ENCODE measurements at regions of chr1 and their contacts with region 1.

Region 1: DNA sequence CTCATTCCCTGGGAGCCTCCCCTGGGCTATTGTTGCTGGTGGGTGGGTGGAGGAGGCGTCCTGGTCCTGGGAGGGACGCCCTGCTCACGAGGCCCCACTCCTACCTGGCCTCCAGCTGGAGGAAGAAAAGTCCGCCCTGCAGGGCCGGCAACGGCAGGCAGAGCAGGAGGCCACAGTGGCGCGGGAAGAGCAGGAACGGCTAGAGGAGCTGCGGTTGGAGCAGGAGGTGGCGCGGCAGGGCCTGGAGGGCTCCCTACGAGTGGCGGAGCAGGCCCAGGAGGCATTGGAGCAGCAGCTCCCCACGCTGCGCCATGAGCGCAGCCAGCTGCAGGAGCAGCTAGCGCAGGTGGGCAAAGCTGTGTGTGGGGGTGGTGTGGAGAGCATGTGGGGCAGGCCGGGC is 24.9 kb downstream of the CROCC start:
- DNase-seq: no peak
- ATAC-seq: no peak
- H3K4me3 ChIP-seq: no peak overlapping the region
- H3K4me3 Mint-ChIP-seq: no peak overlapping the region
- H3K27ac ChIP-seq: no peak overlapping the region
- H3K27ac Mint-ChIP-seq: no peak overlapping the region
- H3K4me1 ChIP-seq: no peaks in the 10 kb centered on the region
- H3K4me1 Mint-ChIP-seq: no peaks in the 10 kb centered on the region
- H3K27me3 ChIP-seq: no peaks in the 10 kb centered on the region
- H3K27me3 Mint-ChIP-seq: no peaks in the 10 kb centered on the region
- CTCF ChIP-seq: no peak

Region 2: DNA sequence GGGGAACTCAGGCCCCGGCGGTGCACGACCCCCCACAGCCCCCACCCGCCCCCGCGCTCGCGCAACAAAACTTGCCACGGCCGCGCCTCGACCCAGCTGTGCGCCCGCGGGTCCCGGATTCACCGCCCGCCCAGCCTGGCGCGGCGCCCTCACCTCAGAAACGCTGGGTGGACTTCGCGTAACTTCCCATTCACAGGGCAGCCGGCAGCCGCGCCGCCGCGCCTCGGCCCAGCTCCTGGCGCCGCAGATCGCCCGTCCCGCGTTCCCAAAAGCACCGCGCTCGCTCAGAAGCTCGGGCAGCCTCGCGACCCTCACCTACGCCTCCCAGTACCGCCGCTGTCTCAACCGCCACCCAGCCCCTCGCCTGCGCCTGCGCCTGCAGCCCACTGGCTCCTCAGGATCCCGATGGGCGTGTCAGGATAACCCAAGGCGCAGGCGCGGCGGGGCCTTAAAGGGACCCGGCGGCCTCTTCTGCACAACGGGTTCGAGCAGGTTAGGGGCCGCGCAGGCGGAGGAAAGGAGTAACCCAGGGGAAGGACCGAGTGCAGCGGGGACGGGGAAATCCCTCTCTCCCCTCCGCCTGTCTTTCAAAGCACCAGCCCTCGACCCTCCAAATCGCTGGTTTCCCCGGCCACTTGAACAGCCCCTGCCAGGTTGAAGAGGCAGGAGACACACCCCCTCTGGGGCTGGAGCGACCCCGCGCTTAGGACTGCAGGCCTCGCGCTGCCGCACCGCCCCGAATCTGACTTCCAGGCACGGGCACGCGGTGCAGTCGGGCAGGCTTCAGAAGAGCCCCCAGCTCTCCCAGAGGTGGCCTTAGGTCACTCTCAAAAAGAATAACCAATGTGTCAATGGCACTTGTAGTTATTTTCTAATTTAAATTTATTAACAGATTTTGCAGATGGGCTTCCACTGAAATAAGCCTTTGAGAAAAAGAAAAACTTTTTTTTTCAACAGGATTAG is 333.2 kb before region 1 on chr1 and contains the start of gene NBPF1:
- CTCF ChIA-PET with region 1: interaction called, 13 read pairs
- POLR2A ChIA-PET with region 1: interaction called, 3 read pairs
- intact Hi-C with region 1: loop called in 1 of 2 experiments (anchors 1 kb)
- DNase-seq: peak; percentile 66 to 95 (median 93)
- ATAC-seq: peak; percentile 94
- H3K4me3 ChIP-seq: peak within 1 kb of the TSS; percentile 61 to 68
- H3K4me3 Mint-ChIP-seq: no peak within 1 kb of the TSS
- H3K27ac ChIP-seq: peak within 1 kb of the TSS; percentile 21 to 42
- H3K27ac Mint-ChIP-seq: no peak within 1 kb of the TSS
- H3K4me1 ChIP-seq: peaks cover 18% of the 10 kb centered on the region
- H3K4me1 Mint-ChIP-seq: no peaks in the 10 kb centered on the region
- H3K27me3 ChIP-seq: no peaks in the 10 kb centered on the region
- H3K27me3 Mint-ChIP-seq: no peaks in the 10 kb centered on the region
- CTCF ChIP-seq: no peak
- total RNA-seq, gene NBPF1: 5.4 to 7.0 TPM

Region 3: DNA sequence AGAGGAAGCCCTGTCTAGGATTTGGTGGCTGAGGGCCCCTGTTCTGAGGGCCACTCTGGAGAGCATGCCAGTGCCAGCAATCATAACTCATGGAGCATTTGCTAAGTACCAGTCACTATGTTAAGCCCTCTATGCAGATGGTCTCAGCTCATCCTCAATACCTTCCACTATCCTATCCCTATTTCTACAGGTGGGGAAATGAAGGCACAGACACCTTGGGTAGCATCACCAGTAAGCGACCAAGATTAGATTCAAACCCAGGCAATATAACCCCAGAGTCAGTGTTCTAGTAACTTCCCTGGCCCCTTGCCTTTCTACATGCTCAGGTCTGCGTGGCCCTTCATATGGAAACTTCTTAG is 325.4 kb before region 1 on chr1:
- CTCF ChIA-PET with region 1: interaction called, 13 read pairs
- POLR2A ChIA-PET with region 1: no interaction called
- intact Hi-C with region 1: loop called in 1 of 2 experiments (anchors 1 kb)
- DNase-seq: no peak
- ATAC-seq: no peak
- H3K4me3 ChIP-seq: no peak overlapping the region
- H3K4me3 Mint-ChIP-seq: no peak overlapping the region
- H3K27ac ChIP-seq: no peak overlapping the region
- H3K27ac Mint-ChIP-seq: no peak overlapping the region
- H3K4me1 ChIP-seq: no peaks in the 10 kb centered on the region
- H3K4me1 Mint-ChIP-seq: no peaks in the 10 kb centered on the region
- H3K27me3 ChIP-seq: no peaks in the 10 kb centered on the region
- H3K27me3 Mint-ChIP-seq: no peaks in the 10 kb centered on the region
- CTCF ChIP-seq: no peak

Region 4: GRCh38 chr1:16960560-16961296 is 14.1 kb after region 1 on chr1:
- CTCF ChIA-PET with region 1: interaction called, 36 read pairs
- POLR2A ChIA-PET with region 1: no interaction called
- intact Hi-C with region 1: loop called in 1 of 2 experiments (anchors 1 kb)
- DNase-seq: peak; percentile 37 to 83 (median 76)
- ATAC-seq: peak; percentile 87
- H3K4me3 ChIP-seq: peak overlapping the region; percentile 39 to 41
- H3K4me3 Mint-ChIP-seq: peak overlapping the region; percentile 80
- H3K27ac ChIP-seq: no peak overlapping the region
- H3K27ac Mint-ChIP-seq: no peak overlapping the region
- H3K4me1 ChIP-seq: no peaks in the 10 kb centered on the region
- H3K4me1 Mint-ChIP-seq: peaks cover 10% of the 10 kb centered on the region
- H3K27me3 ChIP-seq: no peaks in the 10 kb centered on the region
- H3K27me3 Mint-ChIP-seq: no peaks in the 10 kb centered on the region
- CTCF ChIP-seq: peak; percentile 73

Region 5: GRCh38 chr1:17045634-17046333 is 99.1 kb after region 1 on chr1:
- CTCF ChIA-PET with region 1: interaction called, 8 read pairs
- POLR2A ChIA-PET with region 1: no interaction called
- intact Hi-C with region 1: loop called (anchors 1 kb)
- DNase-seq: peak in 2 of 9 experiments; percentile 36 to 55
- ATAC-seq: peak; percentile 34
- H3K4me3 ChIP-seq: no peak overlapping the region
- H3K4me3 Mint-ChIP-seq: peak overlapping the region; percentile 39
- H3K27ac ChIP-seq: no peak overlapping the region
- H3K27ac Mint-ChIP-seq: peak overlapping the region; percentile 45
- H3K4me1 ChIP-seq: peaks cover 6% of the 10 kb centered on the region
- H3K4me1 Mint-ChIP-seq: peaks cover 16% of the 10 kb centered on the region
- H3K27me3 ChIP-seq: no peaks in the 10 kb centered on the region
- H3K27me3 Mint-ChIP-seq: no peaks in the 10 kb centered on the region
- CTCF ChIP-seq: no peak

Measured in CD8-positive, alpha-beta T cell (primary cell).